ENCODE measurements at regions of chr3 and their contacts with region 1.

Region 1: GRCh38 chr3:52123106-52123725 is 31.0 kb downstream of the POC1A start:
- DNase-seq: peak; percentile 60 to 83
- H3K4me3 ChIP-seq: no peak overlapping the region
- H3K27ac ChIP-seq: peak overlapping the region in 1 of 2 donors; percentile 30
- H3K4me1 ChIP-seq: peaks cover 0 to 7% (median 0%) of the 10 kb centered on the region in 4 donors
- H3K27me3 ChIP-seq: no peaks in the 10 kb centered on the region
- CTCF ChIP-seq: peak; percentile 96 to 97

Region 2: GRCh38 chr3:52001443-52001974 is 121.7 kb before region 1 on chr3:
- intact Hi-C with region 1: loop called (anchors 2 kb)
- DNase-seq: peak; percentile 60 to 81
- H3K4me3 ChIP-seq: no peak overlapping the region
- H3K27ac ChIP-seq: no peak overlapping the region
- H3K4me1 ChIP-seq: peaks cover 0 to 27% (median 21%) of the 10 kb centered on the region in 4 donors
- H3K27me3 ChIP-seq: peaks cover 0 to 29% of the 10 kb centered on the region in 2 donors
- CTCF ChIP-seq: peak; percentile 84 to 98